ENCODE measurements at regions of chr13 and their contacts with region 1.

Region 1: GRCh38 chr13:62653371-62653770 is 1237.7 kb upstream of the PCDH20 start:
- DNase-seq: peak; percentile 52
- ATAC-seq: peak; percentile 88
- H3K4me3 ChIP-seq: no peak overlapping the region
- H3K27ac ChIP-seq: no peak overlapping the region
- H3K4me1 ChIP-seq: peaks cover 4% of the 10 kb centered on the region; the same call in 1 of the 2 replicates
- H3K27me3 ChIP-seq: no peaks in the 10 kb centered on the region
- CTCF ChIP-seq: no peak

Region 2: GRCh38 chr13:62432906-62433305 is 220.5 kb before region 1 on chr13:
- CTCF ChIA-PET with region 1: no interaction called
- POLR2A ChIA-PET with region 1: no interaction called
- intact Hi-C with region 1: loop called (anchors 5 kb)
- DNase-seq: no peak
- ATAC-seq: no peak; the same call in 1 of the 2 replicates
- H3K4me3 ChIP-seq: no peak overlapping the region
- H3K27ac ChIP-seq: no peak overlapping the region
- H3K4me1 ChIP-seq: peaks cover 4% of the 10 kb centered on the region; the same call in 1 of the 2 replicates
- H3K27me3 ChIP-seq: no peaks in the 10 kb centered on the region
- CTCF ChIP-seq: no peak

Region 3: GRCh38 chr13:62702502-62702901 is 49.1 kb after region 1 on chr13:
- CTCF ChIA-PET with region 1: no interaction called
- POLR2A ChIA-PET with region 1: no interaction called
- intact Hi-C with region 1: loop called (anchors 5 kb)
- DNase-seq: no peak
- ATAC-seq: no peak
- H3K4me3 ChIP-seq: no peak overlapping the region
- H3K27ac ChIP-seq: no peak overlapping the region
- H3K4me1 ChIP-seq: peaks cover 3% of the 10 kb centered on the region; the same call in 1 of the 2 replicates
- H3K27me3 ChIP-seq: no peaks in the 10 kb centered on the region
- CTCF ChIP-seq: no peak

Measured in PC-3 (cell line).